Ascending aorta (tissue), 2 donors: ENCODE measurements at regions of chr6 and their contacts with region 1.

Region 1: DNA sequence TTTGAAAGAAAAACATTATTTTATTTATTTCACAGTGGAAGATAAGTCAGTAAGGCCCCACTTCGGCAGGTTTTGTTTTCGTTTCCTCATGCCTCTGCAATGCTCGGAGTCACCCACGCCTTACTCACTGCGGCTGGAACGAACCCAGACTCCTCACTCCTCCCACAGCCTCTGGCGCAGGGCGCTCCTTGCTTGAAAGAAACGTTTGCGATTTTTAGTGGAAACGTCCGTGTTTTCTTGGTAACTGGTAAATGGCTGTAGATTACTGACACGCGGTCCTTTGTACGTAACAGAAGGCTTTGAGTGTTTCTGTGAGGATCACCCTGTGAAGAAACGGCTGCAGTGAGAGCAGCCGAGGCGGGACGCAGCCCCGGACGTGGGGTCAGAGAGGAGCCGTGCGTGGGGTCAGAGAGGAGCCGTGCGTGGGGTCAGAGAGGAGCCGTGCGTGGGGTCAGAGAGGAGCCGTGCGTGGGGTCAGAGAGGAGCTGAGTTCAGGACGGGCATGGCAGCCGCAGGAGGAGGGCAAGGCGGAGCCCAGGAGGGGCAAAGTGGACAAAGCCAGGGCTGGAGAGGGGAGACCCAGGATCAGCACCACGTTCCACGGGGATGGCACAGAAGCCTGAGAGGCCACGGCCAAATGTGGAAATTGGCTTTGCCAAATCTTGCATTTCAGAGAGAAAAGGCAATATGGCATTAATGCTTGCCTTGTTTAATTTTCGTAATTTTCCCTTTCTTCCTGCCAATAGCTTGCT is 198.6 kb upstream of the THBS2 start:
- DNase-seq: peak; percentile 54 to 91
- H3K4me3 ChIP-seq: peak overlapping the region; percentile 47 to 49
- H3K27ac ChIP-seq: peak overlapping the region; percentile 74 to 93
- H3K4me1 ChIP-seq: peaks cover 0 to 13% of the 10 kb centered on the region in 2 donors
- H3K27me3 ChIP-seq: no peaks in the 10 kb centered on the region
- CTCF ChIP-seq: no peak

Region 2: DNA sequence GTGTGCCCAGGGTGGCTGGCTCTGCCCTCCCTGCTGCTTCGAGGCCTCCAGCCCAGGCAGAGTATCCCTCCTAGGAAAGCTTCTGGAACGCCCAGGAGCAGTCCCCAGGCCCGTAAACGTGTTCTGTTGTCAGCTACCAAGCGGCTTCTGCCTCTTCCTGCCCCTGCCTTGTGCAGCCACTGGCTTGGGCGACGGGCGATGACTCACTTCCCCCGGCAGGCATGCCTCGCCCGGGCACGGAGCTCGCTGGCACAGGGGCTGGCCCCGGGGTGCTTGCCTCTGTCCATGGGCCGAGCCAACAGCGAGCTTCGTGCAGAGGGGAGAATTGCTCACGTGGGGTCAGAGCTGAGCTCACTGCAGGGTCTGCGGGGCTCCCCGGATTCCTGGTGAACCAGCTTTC is 111.9 kb before region 1 on chr6:
- intact Hi-C with region 1: loop called (anchors 5 kb)
- DNase-seq: peak in 1 of 2 donors; percentile 82
- H3K4me3 ChIP-seq: no peak overlapping the region
- H3K27ac ChIP-seq: peak overlapping the region; percentile 4 to 53
- H3K4me1 ChIP-seq: peaks cover 8 to 9% of the 10 kb centered on the region in 2 donors
- H3K27me3 ChIP-seq: no peaks in the 10 kb centered on the region
- CTCF ChIP-seq: no peak

Region 3: DNA sequence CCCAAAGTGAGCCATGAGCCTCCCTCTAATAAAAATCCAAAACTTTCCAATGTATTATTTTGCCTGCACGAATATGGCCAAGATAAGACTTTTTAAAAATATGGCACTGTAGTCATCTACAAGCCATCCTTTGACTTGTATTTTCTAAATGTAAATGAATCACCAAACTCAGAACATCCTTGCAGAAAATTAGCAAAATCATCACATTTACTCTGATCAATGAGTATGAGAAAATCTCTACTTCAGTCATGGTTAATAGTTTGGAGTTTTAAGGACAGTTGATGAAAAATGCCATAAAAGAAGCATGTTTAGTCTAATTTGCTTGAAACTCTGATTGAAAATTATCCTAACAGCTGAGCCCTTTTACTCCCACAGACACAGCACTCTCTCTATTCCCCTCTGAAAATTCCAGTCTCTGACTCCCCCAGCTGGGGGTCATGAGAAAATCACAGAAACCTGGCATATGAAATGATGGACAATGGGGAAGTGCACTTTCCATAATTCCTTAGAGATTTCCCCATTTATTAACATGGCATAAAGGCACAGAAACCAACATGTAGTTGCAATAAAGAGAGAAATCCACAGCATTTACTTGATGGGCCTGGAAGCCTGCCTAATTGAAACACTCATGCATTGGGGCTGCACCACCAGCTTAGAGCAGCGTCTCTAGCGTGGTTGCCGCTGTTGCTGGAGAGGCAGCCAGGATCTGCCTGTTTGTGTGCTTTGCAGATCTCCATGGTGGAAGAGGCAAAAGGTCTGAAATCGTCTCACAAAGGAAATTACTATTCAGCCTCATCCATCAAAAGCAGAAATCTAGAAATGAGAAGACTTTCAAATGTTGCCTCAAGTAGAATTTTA is 35.5 kb after region 1 on chr6:
- intact Hi-C with region 1: loop called (anchors 5 kb)
- DNase-seq: no peak
- H3K4me3 ChIP-seq: no peak overlapping the region
- H3K27ac ChIP-seq: no peak overlapping the region
- H3K4me1 ChIP-seq: peaks cover 12 to 21% of the 10 kb centered on the region in 2 donors
- H3K27me3 ChIP-seq: no peaks in the 10 kb centered on the region
- CTCF ChIP-seq: peak in 2 of 3 experiments; percentile 5 to 29

Region 4: DNA sequence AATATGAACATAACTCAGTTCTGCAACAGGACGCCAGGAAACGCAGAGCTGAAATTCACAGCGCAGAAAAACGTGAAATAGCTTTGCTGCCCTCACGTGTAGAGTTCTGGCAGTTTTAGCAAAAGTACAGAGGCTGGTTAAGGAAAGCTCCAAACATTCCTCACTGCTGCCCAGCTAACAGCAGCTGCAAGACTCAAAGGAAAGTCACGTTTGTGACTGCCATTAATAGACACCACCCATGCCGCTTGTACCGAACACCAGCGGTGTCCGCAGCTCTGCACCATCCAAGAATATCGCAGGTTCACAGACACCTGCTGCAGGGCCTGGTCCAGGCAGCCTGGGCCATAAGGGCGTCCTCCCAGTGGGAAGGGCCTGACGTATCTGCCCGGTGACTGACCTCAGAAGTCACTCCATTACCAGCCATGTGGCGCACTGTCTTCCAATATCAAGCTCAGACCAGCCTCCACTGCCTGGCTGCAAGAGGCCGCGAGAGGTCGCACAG is 188.1 kb after region 1 on chr6:
- intact Hi-C with region 1: no loop called
- DNase-seq: no peak
- H3K4me3 ChIP-seq: no peak overlapping the region
- H3K27ac ChIP-seq: no peak overlapping the region
- H3K4me1 ChIP-seq: no peaks in the 10 kb centered on the region
- H3K27me3 ChIP-seq: no peaks in the 10 kb centered on the region
- CTCF ChIP-seq: peak; percentile 36 to 51 (median 46)